Posterior vena cava (tissue), 2 donors: ENCODE measurements at regions of chr2 and their contacts with region 1.

Region 1: DNA sequence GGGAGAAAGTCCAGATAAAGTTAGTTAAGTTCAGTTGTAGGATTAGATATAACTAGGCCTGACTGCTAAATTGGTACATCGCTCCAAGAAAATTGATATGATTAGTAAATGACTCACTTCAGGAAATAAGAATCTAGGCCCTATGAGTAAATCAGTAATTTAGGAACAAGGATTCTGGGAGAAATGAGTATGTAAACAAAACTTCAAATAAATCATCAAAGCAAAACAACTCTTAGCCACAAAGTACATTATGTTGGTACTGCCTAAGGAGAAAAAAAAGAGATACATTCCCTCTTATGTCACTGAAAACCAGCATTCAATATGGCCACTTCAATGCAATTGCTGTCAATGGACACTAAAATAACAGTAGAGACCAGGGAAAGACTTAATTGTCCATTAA is 529.1 kb downstream of the ZNF804A start:
- DNase-seq: no peak

Region 2: DNA sequence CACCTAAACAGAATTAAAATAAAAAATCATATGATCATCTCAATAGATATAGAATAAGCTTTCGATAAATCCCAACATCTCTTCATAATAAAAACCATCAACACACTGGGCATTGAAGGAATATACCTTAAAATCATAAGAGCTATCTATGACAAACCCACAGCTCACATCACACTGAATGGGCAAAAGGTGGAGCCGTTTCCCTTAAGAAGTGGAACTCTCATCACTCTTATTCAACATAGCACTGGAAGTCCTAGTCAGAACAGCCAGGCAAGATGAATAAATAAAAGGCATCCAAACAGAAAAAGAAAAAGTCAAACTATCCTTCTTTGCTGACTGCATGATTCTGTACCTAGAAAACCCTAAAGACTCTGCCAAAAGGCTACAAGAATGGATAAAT is 18.8 kb before region 1 on chr2:
- intact Hi-C with region 1: loop called in 1 of 2 experiments (anchors 1 kb)
- DNase-seq: no peak

Region 3: DNA sequence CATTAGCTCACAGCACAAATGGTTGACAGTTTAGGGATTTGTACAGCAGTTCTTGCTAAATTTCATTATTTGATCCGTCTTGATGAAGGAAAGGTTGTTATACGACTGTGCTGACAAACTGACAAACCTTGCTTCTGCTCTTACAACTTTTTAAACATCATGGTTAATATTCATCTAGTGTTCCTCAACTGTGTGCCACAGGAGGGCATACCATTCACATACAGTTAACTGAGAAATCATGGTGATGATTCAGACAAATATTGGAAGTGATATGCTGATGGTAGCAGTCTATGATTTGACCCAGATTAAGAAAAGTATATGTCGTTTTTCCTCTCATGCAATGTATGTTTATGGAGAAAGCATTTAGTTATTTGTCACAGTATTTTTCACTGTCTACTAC is 481.4 kb after region 1 on chr2:
- intact Hi-C with region 1: no loop called
- DNase-seq: no peak